ENCODE measurements at regions of chr9 and their contacts with region 1.

Region 1: GRCh38 chr9:3385871-3386270 is 139.9 kb downstream of the RFX3 start:
- DNase-seq: peak; percentile 75
- H3K4me3 Mint-ChIP-seq: no peak overlapping the region
- H3K27ac Mint-ChIP-seq: peak overlapping the region; percentile 56
- H3K4me1 Mint-ChIP-seq: peaks cover 49% of the 10 kb centered on the region
- H3K27me3 Mint-ChIP-seq: no peaks in the 10 kb centered on the region

Region 2: GRCh38 chr9:2837915-2838314 is 548.0 kb before region 1 on chr9:
- CTCF ChIA-PET with region 1: no interaction called
- intact Hi-C with region 1: loop called (anchors 5 kb)
- DNase-seq: no peak
- H3K4me3 Mint-ChIP-seq: no peak overlapping the region
- H3K27ac Mint-ChIP-seq: no peak overlapping the region
- H3K4me1 Mint-ChIP-seq: peaks cover 12% of the 10 kb centered on the region
- H3K27me3 Mint-ChIP-seq: no peaks in the 10 kb centered on the region

Region 3: GRCh38 chr9:3398232-3398648 is 12.4 kb after region 1 on chr9:
- CTCF ChIA-PET with region 1: interaction called, 3 read pairs
- intact Hi-C with region 1: loop called (anchors 1 kb)
- DNase-seq: peak; percentile 31
- H3K4me3 Mint-ChIP-seq: peak overlapping the region; percentile 53
- H3K27ac Mint-ChIP-seq: peak overlapping the region; percentile 86
- H3K4me1 Mint-ChIP-seq: peaks cover 37% of the 10 kb centered on the region
- H3K27me3 Mint-ChIP-seq: no peaks in the 10 kb centered on the region

Region 4: GRCh38 chr9:3478549-3478953 is 92.7 kb after region 1 on chr9:
- CTCF ChIA-PET with region 1: no interaction called
- intact Hi-C with region 1: loop called (anchors 1 kb)
- DNase-seq: peak; percentile 50
- H3K4me3 Mint-ChIP-seq: peak overlapping the region; percentile 43
- H3K27ac Mint-ChIP-seq: peak overlapping the region; percentile 83
- H3K4me1 Mint-ChIP-seq: peaks cover 72% of the 10 kb centered on the region
- H3K27me3 Mint-ChIP-seq: no peaks in the 10 kb centered on the region

Region 5: DNA sequence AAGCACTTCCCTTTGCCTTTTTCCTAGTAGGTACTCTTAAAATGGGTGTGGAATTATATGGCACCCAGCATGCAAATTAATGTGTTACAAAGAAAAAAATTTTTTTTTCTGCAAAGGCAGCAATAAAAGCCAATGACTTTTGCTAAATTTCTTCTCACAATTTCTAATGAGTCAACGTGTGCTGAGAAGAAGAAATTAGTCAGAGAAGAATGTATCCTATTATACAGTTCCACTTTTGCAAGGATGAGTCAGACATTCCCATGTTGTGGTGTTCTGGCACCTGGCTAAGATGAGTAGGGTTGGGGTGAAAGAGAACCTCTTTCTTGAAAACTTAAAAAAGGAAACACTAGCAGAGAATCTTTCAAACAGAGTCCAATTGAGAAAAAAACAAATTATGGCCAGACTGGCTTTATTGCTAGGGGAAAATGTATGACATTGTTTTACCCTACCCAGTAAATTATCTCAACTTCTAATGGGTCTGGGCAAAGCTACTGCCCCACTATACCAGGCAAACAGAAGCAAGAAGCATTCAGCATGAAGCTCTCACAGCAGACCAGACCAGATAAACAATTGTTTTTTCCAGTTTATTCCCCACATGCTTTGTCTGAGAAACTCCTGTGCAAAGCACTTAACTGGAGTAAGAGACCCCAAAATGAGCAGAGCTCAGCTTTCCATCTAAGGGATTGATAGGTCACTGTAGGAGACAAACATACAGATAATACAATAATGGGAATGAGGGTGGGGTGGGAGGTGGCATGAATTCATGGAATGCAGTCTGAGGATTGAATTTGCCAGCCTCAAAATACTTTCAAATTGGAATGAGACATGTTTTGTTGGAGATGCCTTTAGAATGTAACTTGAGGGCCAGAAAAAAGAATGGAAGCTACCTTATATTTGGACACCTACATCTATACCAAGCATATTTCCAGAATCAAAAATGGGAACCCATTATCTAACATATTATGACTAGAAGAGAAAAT is 360.7 kb after region 1 on chr9:
- CTCF ChIA-PET with region 1: no interaction called
- intact Hi-C with region 1: loop called (anchors 1 kb)
- DNase-seq: peak; percentile 79
- H3K4me3 Mint-ChIP-seq: no peak overlapping the region
- H3K27ac Mint-ChIP-seq: peak overlapping the region; percentile 71
- H3K4me1 Mint-ChIP-seq: peaks cover 46% of the 10 kb centered on the region
- H3K27me3 Mint-ChIP-seq: peaks cover 5% of the 10 kb centered on the region

Region 6: GRCh38 chr9:4662108-4662988 is 1276.5 kb after region 1 on chr9 and contains the start of gene PLPP6:
- CTCF ChIA-PET with region 1: no interaction called
- intact Hi-C with region 1: loop called (anchors 10 kb)
- DNase-seq: peak; percentile 91
- H3K4me3 Mint-ChIP-seq: peak within 1 kb of the TSS; percentile 87
- H3K27ac Mint-ChIP-seq: peak within 1 kb of the TSS; percentile 77
- H3K4me1 Mint-ChIP-seq: peaks cover 52% of the 10 kb centered on the region
- H3K27me3 Mint-ChIP-seq: no peaks in the 10 kb centered on the region
- total RNA-seq, gene PLPP6: 4.6 to 5.3 TPM